A549 (cell line): ENCODE measurements at regions of chr1 and their contacts with region 1.

Region 1: GRCh38 chr1:197915862-197916499 is 1.2 kb upstream of the LHX9 start:
- DNase-seq: peak; percentile 82 to 85
- ATAC-seq: peak; percentile 79 to 92
- H3K4me3 ChIP-seq: peak overlapping the region; percentile 54
- H3K27ac ChIP-seq: peak overlapping the region; percentile 60 to 83; a peak in 5 of 6 replicates
- H3K4me1 ChIP-seq: peaks cover 14% of the 10 kb centered on the region; the same call in 2 of the 3 replicates
- CTCF ChIP-seq: peak; percentile 58
- EP300 ChIP-seq: no peak
- POLR2A ChIP-seq: no peak
- RAD21 ChIP-seq: peak; percentile 42 to 53

Region 2: GRCh38 chr1:197902454-197903195 is 13.4 kb before region 1 on chr1 and contains the start of gene C1orf53:
- CTCF ChIA-PET with region 1: interaction called, 42 read pairs
- POLR2A ChIA-PET with region 1: interaction called, 13 read pairs
- DNase-seq: peak; percentile 91 to 94
- ATAC-seq: peak; percentile 96 to 99
- H3K4me3 ChIP-seq: peak within 1 kb of the TSS; percentile 54
- H3K27ac ChIP-seq: peak within 1 kb of the TSS; percentile 91 to 96
- H3K4me1 ChIP-seq: peaks cover 10% of the 10 kb centered on the region; the same call in 2 of the 3 replicates
- CTCF ChIP-seq: no peak
- EP300 ChIP-seq: no peak
- POLR2A ChIP-seq: peak; percentile 90
- RAD21 ChIP-seq: no peak
- polyA plus RNA-seq, gene C1orf53: 6.9 and 7.9 TPM in 2 replicates